Caco-2 (cell line): ENCODE measurements at regions of chr3 and their contacts with region 1.

Region 1: GRCh38 chr3:22960105-22960984 is 242.8 kb upstream of the UBE2E2 start:
- DNase-seq: peak in 1 of 2 experiments; percentile 40
- H3K4me3 ChIP-seq: no peak overlapping the region
- H3K4me3 Mint-ChIP-seq: no peak overlapping the region
- H3K27ac Mint-ChIP-seq: no peak overlapping the region
- H3K4me1 ChIP-seq: no peaks in the 10 kb centered on the region
- H3K4me1 Mint-ChIP-seq: no peaks in the 10 kb centered on the region
- H3K27me3 ChIP-seq: no peaks in the 10 kb centered on the region
- H3K27me3 Mint-ChIP-seq: peaks cover 6% of the 10 kb centered on the region
- CTCF ChIP-seq: peak in 1 of 2 experiments; percentile 76

Region 2: GRCh38 chr3:22922317-22922716 is 38.0 kb before region 1 on chr3:
- CTCF ChIA-PET with region 1: interaction called, 5 read pairs
- POLR2A ChIA-PET with region 1: no interaction called
- intact Hi-C with region 1: loop called (anchors 1 kb)
- DNase-seq: no peak
- H3K4me3 ChIP-seq: no peak overlapping the region
- H3K4me3 Mint-ChIP-seq: no peak overlapping the region
- H3K27ac Mint-ChIP-seq: no peak overlapping the region
- H3K4me1 ChIP-seq: no peaks in the 10 kb centered on the region
- H3K4me1 Mint-ChIP-seq: no peaks in the 10 kb centered on the region
- H3K27me3 ChIP-seq: no peaks in the 10 kb centered on the region
- H3K27me3 Mint-ChIP-seq: peaks cover 10% of the 10 kb centered on the region
- CTCF ChIP-seq: peak in 1 of 2 experiments; percentile 26

Region 3: DNA sequence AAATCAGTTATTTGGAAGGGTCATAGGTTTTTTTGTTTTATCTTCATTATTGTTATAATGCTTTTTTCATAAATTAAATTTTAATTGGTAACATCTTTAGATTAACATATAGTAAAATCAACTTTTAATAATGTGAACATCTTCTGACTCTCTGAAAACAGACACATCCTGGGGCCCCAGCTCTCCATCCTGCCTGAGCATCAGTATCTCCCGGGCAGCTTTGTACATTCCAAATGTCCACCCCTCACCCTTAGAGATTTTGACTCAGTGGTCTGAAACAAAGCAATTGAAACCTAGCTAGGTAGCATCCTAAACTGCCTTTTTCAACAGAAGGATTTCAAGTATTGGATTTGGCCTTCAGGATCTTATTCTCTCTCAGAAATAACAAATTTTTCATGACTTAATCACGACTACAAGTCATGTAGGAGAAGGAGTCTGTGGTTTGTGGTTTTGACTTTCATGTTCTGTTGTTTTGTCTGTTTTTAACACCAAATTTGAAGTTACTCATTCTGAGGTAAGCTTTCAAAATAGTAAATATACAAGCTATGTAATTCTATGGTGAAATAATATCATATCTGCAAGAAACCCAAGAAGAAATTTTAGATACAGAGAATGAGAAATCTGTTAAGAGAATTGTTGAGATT is 95.5 kb after region 1 on chr3:
- CTCF ChIA-PET with region 1: no interaction called
- POLR2A ChIA-PET with region 1: no interaction called
- intact Hi-C with region 1: no loop called
- DNase-seq: no peak
- H3K4me3 ChIP-seq: no peak overlapping the region
- H3K4me3 Mint-ChIP-seq: no peak overlapping the region
- H3K27ac Mint-ChIP-seq: no peak overlapping the region
- H3K4me1 ChIP-seq: no peaks in the 10 kb centered on the region
- H3K4me1 Mint-ChIP-seq: no peaks in the 10 kb centered on the region
- H3K27me3 ChIP-seq: no peaks in the 10 kb centered on the region
- H3K27me3 Mint-ChIP-seq: peaks cover 8% of the 10 kb centered on the region
- CTCF ChIP-seq: no peak

Region 4: DNA sequence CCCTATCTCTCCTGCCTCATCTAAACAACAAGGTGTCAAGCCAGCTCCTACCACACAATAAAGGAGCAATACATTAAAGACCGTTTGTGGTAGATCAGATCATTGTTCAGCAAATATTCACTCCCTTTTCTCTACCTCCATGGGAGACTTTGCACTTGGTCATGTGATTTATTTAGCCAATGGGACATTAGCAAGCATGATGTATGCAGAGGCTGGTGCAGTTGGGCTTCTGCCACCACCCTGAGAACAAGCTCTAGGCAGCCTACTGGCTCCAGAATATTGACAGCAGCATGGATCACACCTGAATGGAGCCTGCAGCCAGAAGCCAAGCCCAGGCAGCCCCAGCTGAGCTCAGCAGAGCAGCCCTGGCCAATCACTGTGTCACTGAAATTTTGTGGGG is 143.4 kb after region 1 on chr3:
- CTCF ChIA-PET with region 1: no interaction called
- POLR2A ChIA-PET with region 1: no interaction called
- intact Hi-C with region 1: no loop called
- DNase-seq: peak in 1 of 2 experiments; percentile 6
- H3K4me3 ChIP-seq: no peak overlapping the region
- H3K4me3 Mint-ChIP-seq: no peak overlapping the region
- H3K27ac Mint-ChIP-seq: no peak overlapping the region
- H3K4me1 ChIP-seq: peaks cover 3% of the 10 kb centered on the region; the same call in 1 of the 2 replicates
- H3K4me1 Mint-ChIP-seq: no peaks in the 10 kb centered on the region
- H3K27me3 ChIP-seq: no peaks in the 10 kb centered on the region
- H3K27me3 Mint-ChIP-seq: no peaks in the 10 kb centered on the region
- CTCF ChIP-seq: no peak